IMR-90 (cell line): ENCODE measurements at regions of chr17 and their contacts with region 1.

Region 1: DNA sequence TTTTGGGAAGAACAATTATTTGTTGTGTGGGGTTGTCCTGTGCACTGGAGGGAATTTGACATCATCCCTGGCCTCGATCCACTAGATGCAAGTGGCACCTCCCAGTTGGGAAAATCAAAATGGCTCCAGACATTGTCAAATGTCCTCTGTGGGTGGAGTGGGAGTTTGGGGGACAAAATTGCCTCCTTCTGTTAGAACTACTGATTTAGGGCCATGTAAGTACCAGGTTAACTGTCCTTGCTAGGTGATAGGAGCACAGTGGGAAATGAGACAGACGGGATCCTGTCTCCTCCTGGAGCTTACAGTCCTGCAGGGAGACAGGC is 56.8 kb downstream of the ARHGAP23 start:
- DNase-seq: no peak
- ATAC-seq: no peak
- H3K4me3 ChIP-seq: no peak overlapping the region
- H3K27ac ChIP-seq: peak overlapping the region; percentile 7; the same call in 1 of the 2 replicates
- H3K4me1 ChIP-seq: peaks cover 11% of the 10 kb centered on the region; the same call in 1 of the 2 replicates
- H3K27me3 ChIP-seq: no peaks in the 10 kb centered on the region
- CTCF ChIP-seq: no peak
- POLR2A ChIP-seq: no peak
- RAD21 ChIP-seq: no peak

Region 2: GRCh38 chr17:38351412-38352222 is 133.5 kb before region 1 on chr17 and contains the start of gene SOCS7:
- CTCF ChIA-PET with region 1: no interaction called
- POLR2A ChIA-PET with region 1: no interaction called
- dilution Hi-C with region 1: no loop called
- in situ Hi-C with region 1: loop called (anchors 25 kb)
- intact Hi-C with region 1: loop called (anchors 5 kb)
- DNase-seq: peak; percentile 90
- ATAC-seq: peak; percentile 89
- H3K4me3 ChIP-seq: peak within 1 kb of the TSS; percentile 80
- H3K27ac ChIP-seq: peak within 1 kb of the TSS; percentile 78
- H3K4me1 ChIP-seq: peaks cover 4% of the 10 kb centered on the region
- H3K27me3 ChIP-seq: no peaks in the 10 kb centered on the region
- CTCF ChIP-seq: no peak
- POLR2A ChIP-seq: peak; percentile 80
- RAD21 ChIP-seq: no peak
- total RNA-seq, gene SOCS7: 6.5 and 7.5 TPM in 2 replicates

Region 3: GRCh38 chr17:38403491-38403890 is 81.6 kb before region 1 on chr17:
- CTCF ChIA-PET with region 1: no interaction called
- POLR2A ChIA-PET with region 1: no interaction called
- dilution Hi-C with region 1: no loop called
- in situ Hi-C with region 1: no loop called
- intact Hi-C with region 1: no loop called
- DNase-seq: peak; percentile 20
- ATAC-seq: peak; percentile 67
- H3K4me3 ChIP-seq: no peak overlapping the region
- H3K27ac ChIP-seq: no peak overlapping the region
- H3K4me1 ChIP-seq: peaks cover 1% of the 10 kb centered on the region; the same call in 1 of the 2 replicates
- H3K27me3 ChIP-seq: no peaks in the 10 kb centered on the region
- CTCF ChIP-seq: no peak
- POLR2A ChIP-seq: no peak
- RAD21 ChIP-seq: no peak

Region 4: DNA sequence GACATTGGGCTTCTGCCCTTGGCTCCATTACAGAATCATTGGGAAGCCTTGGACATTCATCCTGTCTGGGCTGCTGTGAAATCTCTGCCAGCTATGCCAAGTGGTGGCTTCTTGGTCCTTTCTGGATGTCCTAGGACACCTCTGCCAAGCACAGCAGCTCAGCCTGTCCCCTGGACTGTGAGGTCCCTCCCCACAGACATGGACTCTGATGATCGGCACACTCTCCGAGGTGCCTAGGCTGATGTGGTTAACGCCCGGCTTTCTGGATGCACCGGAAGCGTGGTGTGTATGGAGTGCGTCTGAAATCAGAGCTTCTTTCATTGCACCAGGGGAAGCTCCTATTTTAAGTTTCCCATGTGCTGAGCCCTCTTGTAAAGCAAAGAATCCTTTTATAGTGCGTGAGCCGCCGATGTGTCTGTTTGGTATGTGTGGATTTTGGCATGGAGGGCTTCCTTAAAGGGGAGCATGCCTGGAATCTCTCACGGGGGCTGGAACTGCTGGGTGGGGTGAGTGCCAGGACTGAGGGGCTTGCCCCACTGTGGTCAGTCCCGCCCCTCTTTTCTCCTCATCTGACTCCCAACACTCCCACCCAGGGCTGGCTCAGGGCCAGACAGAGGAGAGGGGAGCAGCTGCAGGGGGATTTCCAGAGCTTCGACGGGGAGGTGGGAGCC is 63.8 kb before region 1 on chr17:
- CTCF ChIA-PET with region 1: no interaction called
- POLR2A ChIA-PET with region 1: no interaction called
- dilution Hi-C with region 1: no loop called
- in situ Hi-C with region 1: no loop called
- intact Hi-C with region 1: loop called (anchors 5 kb)
- DNase-seq: peak; percentile 69
- ATAC-seq: peak; percentile 44
- H3K4me3 ChIP-seq: no peak overlapping the region
- H3K27ac ChIP-seq: no peak overlapping the region
- H3K4me1 ChIP-seq: peaks cover 17% of the 10 kb centered on the region
- H3K27me3 ChIP-seq: peaks cover 27% of the 10 kb centered on the region
- CTCF ChIP-seq: no peak
- POLR2A ChIP-seq: no peak
- RAD21 ChIP-seq: no peak

Region 5: GRCh38 chr17:38444151-38444550 is 41.0 kb before region 1 on chr17:
- CTCF ChIA-PET with region 1: no interaction called
- POLR2A ChIA-PET with region 1: no interaction called
- dilution Hi-C with region 1: no loop called
- in situ Hi-C with region 1: loop called (anchors 5 kb)
- intact Hi-C with region 1: loop called (anchors 5 kb)
- DNase-seq: peak; percentile 63
- ATAC-seq: peak; percentile 88
- H3K4me3 ChIP-seq: no peak overlapping the region
- H3K27ac ChIP-seq: no peak overlapping the region; the same call in 1 of the 2 replicates
- H3K4me1 ChIP-seq: peaks cover 29% of the 10 kb centered on the region
- H3K27me3 ChIP-seq: no peaks in the 10 kb centered on the region
- CTCF ChIP-seq: peak; percentile 96
- POLR2A ChIP-seq: peak; percentile 52; the same call in 1 of the 2 replicates
- RAD21 ChIP-seq: peak; percentile 98

Region 6: GRCh38 chr17:38507436-38507835 is 22.3 kb after region 1 on chr17:
- CTCF ChIA-PET with region 1: no interaction called
- POLR2A ChIA-PET with region 1: no interaction called
- dilution Hi-C with region 1: no loop called
- in situ Hi-C with region 1: no loop called
- intact Hi-C with region 1: no loop called
- DNase-seq: no peak
- ATAC-seq: no peak
- H3K4me3 ChIP-seq: no peak overlapping the region
- H3K27ac ChIP-seq: no peak overlapping the region
- H3K4me1 ChIP-seq: peaks cover 12% of the 10 kb centered on the region
- H3K27me3 ChIP-seq: no peaks in the 10 kb centered on the region
- CTCF ChIP-seq: no peak
- POLR2A ChIP-seq: no peak
- RAD21 ChIP-seq: no peak